ENCODE measurements at regions of chr15 and their contacts with region 1.

Region 1: GRCh38 chr15:84734794-84735479 is 13.5 kb upstream of the ZNF592 start:
- H3K4me3 Mint-ChIP-seq: peak overlapping the region; percentile 60
- H3K27ac Mint-ChIP-seq: peak overlapping the region; percentile 90
- H3K4me1 Mint-ChIP-seq: peaks cover 67% of the 10 kb centered on the region
- H3K27me3 Mint-ChIP-seq: no peaks in the 10 kb centered on the region

Region 2: DNA sequence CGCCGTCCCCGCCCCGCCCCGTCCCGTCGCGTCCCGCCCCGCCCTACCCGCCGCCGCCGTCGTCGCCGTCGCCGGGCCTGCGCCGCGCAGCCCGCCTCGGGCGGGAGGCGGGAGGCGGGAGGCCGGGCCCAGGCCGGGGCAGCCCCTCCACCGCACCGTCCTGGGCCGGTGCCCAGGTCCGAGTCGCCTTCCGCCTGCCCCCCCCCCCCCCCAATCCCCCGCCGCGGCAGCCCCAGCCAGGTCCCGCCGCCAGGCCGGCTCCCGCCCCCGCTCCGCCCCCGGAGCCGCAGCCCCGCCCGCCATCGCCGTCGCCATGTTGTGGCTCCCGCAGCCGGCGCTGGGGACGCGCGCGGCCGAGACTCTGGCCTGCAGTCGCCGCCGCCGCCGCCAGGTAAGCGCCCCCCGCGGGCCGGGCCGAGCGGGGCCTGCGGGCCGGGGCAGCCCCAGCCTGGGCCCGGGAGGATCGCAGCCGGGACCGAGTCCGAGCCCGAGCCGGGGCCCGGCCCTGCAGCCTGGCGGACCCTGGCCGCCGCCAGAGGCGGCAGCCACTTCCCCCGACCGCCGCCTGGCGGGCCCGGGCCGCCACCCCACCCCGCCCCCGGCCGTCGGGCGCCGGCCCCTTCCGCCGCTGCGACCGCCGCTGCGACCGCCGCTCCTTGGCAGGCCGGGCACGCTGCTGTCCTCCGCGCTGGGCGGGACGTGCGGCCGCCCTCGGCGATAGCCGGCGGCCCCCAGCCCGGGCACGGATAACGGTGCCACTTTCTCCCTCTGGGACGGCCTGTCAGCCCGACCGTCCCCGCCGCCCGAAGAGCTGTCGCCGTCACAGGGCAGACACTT is 13.6 kb after region 1 on chr15 and contains the start of gene ZNF592:
- intact Hi-C with region 1: loop called (anchors 1 kb)
- H3K4me3 Mint-ChIP-seq: peak within 1 kb of the TSS; percentile 97
- H3K27ac Mint-ChIP-seq: peak within 1 kb of the TSS; percentile 98
- H3K4me1 Mint-ChIP-seq: peaks cover 70% of the 10 kb centered on the region
- H3K27me3 Mint-ChIP-seq: no peaks in the 10 kb centered on the region

Region 3: GRCh38 chr15:84992157-84992944 is 257.4 kb after region 1 on chr15:
- intact Hi-C with region 1: no loop called
- H3K4me3 Mint-ChIP-seq: no peak overlapping the region
- H3K27ac Mint-ChIP-seq: peak overlapping the region; percentile 8
- H3K4me1 Mint-ChIP-seq: peaks cover 47% of the 10 kb centered on the region
- H3K27me3 Mint-ChIP-seq: no peaks in the 10 kb centered on the region

Measured in dendritic cell treated with granulocyte-macrophage colony-stimulating factor and Interleukin-4, amounts not matched to agents 40 ng/mL and 50 ng/mL, for 4 days (primary cell).